Panc1 (cell line): ENCODE measurements at regions of chr1 and their contacts with region 1.

Region 1: GRCh38 chr1:106121728-106122127 is 934.7 kb upstream of the PRMT6 start:
- DNase-seq: no peak
- ATAC-seq: no peak
- H3K4me3 ChIP-seq: no peak overlapping the region
- H3K27ac ChIP-seq: no peak overlapping the region
- H3K4me1 ChIP-seq: no peaks in the 10 kb centered on the region
- H3K27me3 ChIP-seq: no peaks in the 10 kb centered on the region
- CTCF ChIP-seq: no peak

Region 2: GRCh38 chr1:105909811-105910210 is 211.9 kb before region 1 on chr1:
- CTCF ChIA-PET with region 1: no interaction called
- POLR2A ChIA-PET with region 1: no interaction called
- in situ Hi-C with region 1: no loop called
- intact Hi-C with region 1: no loop called
- DNase-seq: no peak
- ATAC-seq: no peak
- H3K4me3 ChIP-seq: no peak overlapping the region
- H3K27ac ChIP-seq: no peak overlapping the region
- H3K4me1 ChIP-seq: no peaks in the 10 kb centered on the region
- H3K27me3 ChIP-seq: no peaks in the 10 kb centered on the region
- CTCF ChIP-seq: no peak

Region 3: GRCh38 chr1:106111044-106111443 is 10.7 kb before region 1 on chr1:
- CTCF ChIA-PET with region 1: no interaction called
- POLR2A ChIA-PET with region 1: interaction called, 12 read pairs
- in situ Hi-C with region 1: no loop called
- intact Hi-C with region 1: no loop called
- DNase-seq: no peak
- ATAC-seq: no peak
- H3K4me3 ChIP-seq: no peak overlapping the region
- H3K27ac ChIP-seq: no peak overlapping the region
- H3K4me1 ChIP-seq: no peaks in the 10 kb centered on the region
- H3K27me3 ChIP-seq: no peaks in the 10 kb centered on the region
- CTCF ChIP-seq: no peak